AG04449 (cell line): ENCODE measurements at regions of chr19 and their contacts with region 1.

Region 1: DNA sequence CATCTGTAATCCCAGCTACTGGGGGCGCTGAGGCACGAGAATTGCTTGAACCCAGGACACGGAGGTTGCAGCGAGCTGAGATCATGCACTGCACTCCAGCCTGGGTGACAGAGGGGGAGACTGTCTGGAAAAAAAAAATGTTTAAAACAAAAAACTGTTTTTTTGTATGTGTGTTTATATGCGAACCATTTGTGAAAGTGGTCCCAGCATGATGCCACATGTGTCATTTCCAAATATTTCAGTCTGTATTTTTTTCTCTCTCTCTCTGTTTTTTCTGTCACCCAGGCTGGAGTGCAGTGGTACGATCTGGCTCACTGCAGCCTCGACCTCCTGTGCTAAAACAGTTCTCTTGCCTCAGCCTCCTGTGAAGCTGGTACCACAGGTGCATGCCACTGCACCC is 37.4 kb downstream of the SAE1 start:
- DNase-seq: no peak
- H3K4me3 ChIP-seq: no peak overlapping the region
- CTCF ChIP-seq: no peak

Region 2: GRCh38 chr19:47157431-47158321 is 10.4 kb before region 1 on chr19:
- CTCF ChIA-PET with region 1: interaction called, 11 read pairs
- POLR2A ChIA-PET with region 1: no interaction called
- DNase-seq: no peak
- H3K4me3 ChIP-seq: no peak overlapping the region
- CTCF ChIP-seq: no peak

Region 3: GRCh38 chr19:47283405-47284059 is 115.5 kb after region 1 on chr19:
- CTCF ChIA-PET with region 1: no interaction called
- POLR2A ChIA-PET with region 1: no interaction called
- DNase-seq: no peak
- H3K4me3 ChIP-seq: no peak overlapping the region
- CTCF ChIP-seq: no peak

Region 4: GRCh38 chr19:47315125-47315821 is 147.2 kb after region 1 on chr19:
- CTCF ChIA-PET with region 1: no interaction called
- POLR2A ChIA-PET with region 1: no interaction called
- DNase-seq: peak; percentile 44
- H3K4me3 ChIP-seq: no peak overlapping the region
- CTCF ChIP-seq: no peak